Naive thymus-derived CD4-positive, alpha-beta T cell (primary cell): ENCODE measurements at regions of chr19 and their contacts with region 1.

Region 1: GRCh38 chr19:50383852-50384684 is at the start of gene POLD1:
- DNase-seq: peak; percentile 98 to 100 (median 99)
- ATAC-seq: peak; percentile 96
- H3K4me3 ChIP-seq: peak within 1 kb of the TSS; percentile 74
- H3K4me3 Mint-ChIP-seq: peak within 1 kb of the TSS; percentile 91 to 99 (median 94)
- H3K27ac ChIP-seq: peak within 1 kb of the TSS; percentile 75
- H3K27ac Mint-ChIP-seq: peak within 1 kb of the TSS; percentile 80 to 97 (median 94)
- H3K4me1 ChIP-seq: peaks cover 3 to 7% of the 10 kb centered on the region in 2 donors
- H3K4me1 Mint-ChIP-seq: peaks cover 16 to 51% (median 35%) of the 10 kb centered on the region in 7 donors
- H3K27me3 ChIP-seq: no peaks in the 10 kb centered on the region
- H3K27me3 Mint-ChIP-seq: no peaks in the 10 kb centered on the region
- total RNA-seq, gene POLD1: 26.0 to 110 (median 40.8) TPM

Region 2: GRCh38 chr19:50147462-50148423 is 236.3 kb before region 1 on chr19:
- CTCF ChIA-PET with region 1: no interaction called
- POLR2A ChIA-PET with region 1: no interaction called
- intact Hi-C with region 1: loop called in 1 of 2 experiments (anchors 1 kb)
- DNase-seq: peak; percentile 37 to 80 (median 72)
- ATAC-seq: peak; percentile 91
- H3K4me3 ChIP-seq: peak overlapping the region; percentile 63
- H3K4me3 Mint-ChIP-seq: peak overlapping the region; percentile 74 to 97 (median 87)
- H3K27ac ChIP-seq: peak overlapping the region; percentile 53
- H3K27ac Mint-ChIP-seq: peak overlapping the region in 8 of 9 donors; percentile 0 to 62 (median 36)
- H3K4me1 ChIP-seq: no peaks in the 10 kb centered on the region
- H3K4me1 Mint-ChIP-seq: peaks cover 6 to 12% (median 9%) of the 10 kb centered on the region in 7 donors
- H3K27me3 ChIP-seq: peaks cover 0 to 3% of the 10 kb centered on the region in 2 donors
- H3K27me3 Mint-ChIP-seq: peaks cover 14 to 23% (median 20%) of the 10 kb centered on the region in 5 donors

Region 3: GRCh38 chr19:50300814-50301606 is 83.1 kb before region 1 on chr19:
- CTCF ChIA-PET with region 1: no interaction called
- POLR2A ChIA-PET with region 1: no interaction called
- intact Hi-C with region 1: no loop called
- DNase-seq: no peak
- ATAC-seq: no peak
- H3K4me3 ChIP-seq: no peak overlapping the region
- H3K4me3 Mint-ChIP-seq: no peak overlapping the region
- H3K27ac ChIP-seq: no peak overlapping the region
- H3K27ac Mint-ChIP-seq: no peak overlapping the region
- H3K4me1 ChIP-seq: no peaks in the 10 kb centered on the region
- H3K4me1 Mint-ChIP-seq: peaks cover 0 to 4% (median 0%) of the 10 kb centered on the region in 7 donors
- H3K27me3 ChIP-seq: no peaks in the 10 kb centered on the region
- H3K27me3 Mint-ChIP-seq: peaks cover 7 to 57% (median 19%) of the 10 kb centered on the region in 5 donors

Region 4: GRCh38 chr19:50368649-50369570 is 15.2 kb before region 1 on chr19:
- CTCF ChIA-PET with region 1: no interaction called
- POLR2A ChIA-PET with region 1: interaction called, 6 read pairs
- intact Hi-C with region 1: loop called in 1 of 2 experiments (anchors 1 kb)
- DNase-seq: peak; percentile 56 to 83 (median 74)
- ATAC-seq: peak; percentile 91
- H3K4me3 ChIP-seq: peak overlapping the region; percentile 69
- H3K4me3 Mint-ChIP-seq: peak overlapping the region; percentile 68 to 97 (median 93)
- H3K27ac ChIP-seq: peak overlapping the region; percentile 78
- H3K27ac Mint-ChIP-seq: peak overlapping the region; percentile 60 to 97 (median 91)
- H3K4me1 ChIP-seq: peaks cover under 1 to 4% of the 10 kb centered on the region in 2 donors
- H3K4me1 Mint-ChIP-seq: peaks cover 8 to 45% (median 36%) of the 10 kb centered on the region in 7 donors
- H3K27me3 ChIP-seq: no peaks in the 10 kb centered on the region
- H3K27me3 Mint-ChIP-seq: no peaks in the 10 kb centered on the region

Region 5: GRCh38 chr19:50431343-50432220 is 47.5 kb after region 1 on chr19:
- CTCF ChIA-PET with region 1: no interaction called
- POLR2A ChIA-PET with region 1: no interaction called
- intact Hi-C with region 1: loop called (anchors 1 to 5 kb)
- DNase-seq: peak; percentile 80 to 95 (median 89)
- ATAC-seq: peak; percentile 93
- H3K4me3 ChIP-seq: peak overlapping the region; percentile 61
- H3K4me3 Mint-ChIP-seq: peak overlapping the region; percentile 87 to 100 (median 92)
- H3K27ac ChIP-seq: peak overlapping the region; percentile 73
- H3K27ac Mint-ChIP-seq: peak overlapping the region; percentile 61 to 94 (median 90)
- H3K4me1 ChIP-seq: peaks cover 0 to 12% of the 10 kb centered on the region in 2 donors
- H3K4me1 Mint-ChIP-seq: peaks cover 0 to 23% (median 16%) of the 10 kb centered on the region in 7 donors
- H3K27me3 ChIP-seq: no peaks in the 10 kb centered on the region
- H3K27me3 Mint-ChIP-seq: peaks cover 0 to 19% (median 12%) of the 10 kb centered on the region in 5 donors

Region 6: GRCh38 chr19:50511068-50511822 is 127.2 kb after region 1 on chr19 and contains the start of gene JOSD2:
- CTCF ChIA-PET with region 1: no interaction called
- POLR2A ChIA-PET with region 1: interaction called, 10 read pairs
- intact Hi-C with region 1: loop called in 1 of 2 experiments (anchors 2 kb)
- DNase-seq: peak; percentile 89 to 99 (median 96)
- ATAC-seq: peak; percentile 94
- H3K4me3 ChIP-seq: peak within 1 kb of the TSS; percentile 75
- H3K4me3 Mint-ChIP-seq: peak within 1 kb of the TSS; percentile 75 to 97 (median 88)
- H3K27ac ChIP-seq: peak within 1 kb of the TSS; percentile 86
- H3K27ac Mint-ChIP-seq: peak within 1 kb of the TSS; percentile 87 to 99 (median 97)
- H3K4me1 ChIP-seq: peaks cover 7 to 16% of the 10 kb centered on the region in 2 donors
- H3K4me1 Mint-ChIP-seq: peaks cover 0 to 27% (median 19%) of the 10 kb centered on the region in 7 donors
- H3K27me3 ChIP-seq: no peaks in the 10 kb centered on the region
- H3K27me3 Mint-ChIP-seq: peaks cover 0 to 16% (median 6%) of the 10 kb centered on the region in 5 donors
- total RNA-seq, gene JOSD2: 13.0 to 45.9 (median 22.7) TPM

Region 7: DNA sequence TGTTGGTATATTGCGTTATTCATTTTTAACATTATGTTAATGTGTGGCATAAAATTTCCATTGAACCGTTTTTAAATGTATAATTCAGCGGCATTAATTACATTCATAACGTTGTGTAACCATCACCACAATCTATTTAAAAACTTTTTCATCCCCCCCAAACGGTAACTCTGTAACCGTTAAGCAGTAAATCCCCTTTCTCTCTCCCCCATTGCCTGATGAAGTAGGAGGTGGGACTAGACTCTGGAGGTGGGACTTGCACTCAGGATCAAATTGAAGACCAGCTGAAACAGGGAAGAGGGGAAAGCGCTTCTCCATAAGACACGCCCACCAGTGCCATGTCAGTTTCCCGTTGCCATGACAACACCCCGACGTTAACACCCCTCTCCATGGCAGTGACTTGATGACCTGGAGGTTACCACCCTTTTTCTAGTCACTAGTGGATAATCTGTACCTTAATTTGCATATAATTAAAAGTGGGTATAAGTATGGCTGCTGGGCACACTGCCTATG is 355.9 kb after region 1 on chr19:
- CTCF ChIA-PET with region 1: no interaction called
- POLR2A ChIA-PET with region 1: no interaction called
- intact Hi-C with region 1: no loop called
- DNase-seq: no peak
- ATAC-seq: no peak
- H3K4me3 ChIP-seq: no peak overlapping the region
- H3K4me3 Mint-ChIP-seq: no peak overlapping the region
- H3K27ac ChIP-seq: no peak overlapping the region
- H3K27ac Mint-ChIP-seq: no peak overlapping the region
- H3K4me1 ChIP-seq: no peaks in the 10 kb centered on the region
- H3K4me1 Mint-ChIP-seq: no peaks in the 10 kb centered on the region
- H3K27me3 ChIP-seq: no peaks in the 10 kb centered on the region
- H3K27me3 Mint-ChIP-seq: peaks cover 23 to 67% (median 52%) of the 10 kb centered on the region in 5 donors

Region 8: DNA sequence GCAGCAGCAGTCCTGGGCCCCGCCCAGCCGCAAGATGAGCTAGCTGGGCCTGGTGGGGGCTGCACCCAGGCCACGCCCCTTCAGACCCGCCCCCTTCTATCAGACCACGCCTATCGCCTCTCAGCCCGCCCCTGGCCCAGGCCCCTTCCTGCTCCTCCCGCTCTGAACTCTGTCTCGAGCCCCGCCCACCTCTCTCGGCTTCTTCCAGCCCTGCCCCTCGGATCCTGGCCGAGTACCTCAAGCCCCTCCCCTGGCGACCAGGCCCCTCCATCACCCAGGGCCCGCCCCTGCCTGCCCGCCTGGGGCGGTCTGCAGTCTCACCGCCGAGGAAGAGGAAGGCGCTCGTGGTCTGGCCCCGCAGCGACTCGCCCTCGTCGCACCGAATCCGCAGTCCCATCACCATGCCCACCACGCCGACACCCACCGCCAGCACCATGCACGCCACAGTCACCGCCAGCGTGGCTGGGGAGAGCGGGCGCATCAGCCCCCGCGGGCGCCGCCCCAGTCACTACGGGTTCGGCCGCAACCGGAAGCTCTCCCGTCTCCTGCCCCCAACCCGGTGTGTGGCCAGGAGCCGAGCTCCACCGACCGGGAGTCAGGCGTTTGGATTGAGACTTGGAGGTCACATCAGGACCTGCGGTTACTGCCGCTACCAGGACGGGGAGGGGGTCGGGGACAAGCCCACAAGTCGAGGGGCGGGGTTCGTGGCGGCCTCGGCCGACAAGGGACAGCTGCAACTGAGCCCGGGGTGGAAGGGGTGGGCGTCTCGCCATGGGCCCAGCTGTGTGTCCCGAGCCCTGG is 983.7 kb after region 1 on chr19:
- CTCF ChIA-PET with region 1: no interaction called
- POLR2A ChIA-PET with region 1: no interaction called
- intact Hi-C with region 1: loop called in 1 of 2 experiments (anchors 10 kb)
- DNase-seq: peak; percentile 84 to 100 (median 90)
- ATAC-seq: peak; percentile 93
- H3K4me3 ChIP-seq: peak overlapping the region; percentile 96
- H3K4me3 Mint-ChIP-seq: peak overlapping the region; percentile 92 to 100 (median 98)
- H3K27ac ChIP-seq: peak overlapping the region; percentile 81
- H3K27ac Mint-ChIP-seq: peak overlapping the region; percentile 79 to 98 (median 95)
- H3K4me1 ChIP-seq: peaks cover 23 to 26% of the 10 kb centered on the region in 2 donors
- H3K4me1 Mint-ChIP-seq: peaks cover 53 to 81% (median 59%) of the 10 kb centered on the region in 7 donors
- H3K27me3 ChIP-seq: no peaks in the 10 kb centered on the region
- H3K27me3 Mint-ChIP-seq: no peaks in the 10 kb centered on the region